H1 (cell line): ENCODE measurements at regions of chr3 and their contacts with region 1.

Region 1: GRCh38 chr3:82475306-82475705 is 713.9 kb upstream of the GBE1 start:
- DNase-seq: no peak
- H3K4me3 ChIP-seq: no peak overlapping the region
- H3K27ac ChIP-seq: no peak overlapping the region
- H3K4me1 ChIP-seq: no peaks in the 10 kb centered on the region
- H3K27me3 ChIP-seq: no peaks in the 10 kb centered on the region
- CTCF ChIP-seq: no peak
- EP300 ChIP-seq: no peak
- POLR2A ChIP-seq: no peak
- RAD21 ChIP-seq: no peak

Region 2: DNA sequence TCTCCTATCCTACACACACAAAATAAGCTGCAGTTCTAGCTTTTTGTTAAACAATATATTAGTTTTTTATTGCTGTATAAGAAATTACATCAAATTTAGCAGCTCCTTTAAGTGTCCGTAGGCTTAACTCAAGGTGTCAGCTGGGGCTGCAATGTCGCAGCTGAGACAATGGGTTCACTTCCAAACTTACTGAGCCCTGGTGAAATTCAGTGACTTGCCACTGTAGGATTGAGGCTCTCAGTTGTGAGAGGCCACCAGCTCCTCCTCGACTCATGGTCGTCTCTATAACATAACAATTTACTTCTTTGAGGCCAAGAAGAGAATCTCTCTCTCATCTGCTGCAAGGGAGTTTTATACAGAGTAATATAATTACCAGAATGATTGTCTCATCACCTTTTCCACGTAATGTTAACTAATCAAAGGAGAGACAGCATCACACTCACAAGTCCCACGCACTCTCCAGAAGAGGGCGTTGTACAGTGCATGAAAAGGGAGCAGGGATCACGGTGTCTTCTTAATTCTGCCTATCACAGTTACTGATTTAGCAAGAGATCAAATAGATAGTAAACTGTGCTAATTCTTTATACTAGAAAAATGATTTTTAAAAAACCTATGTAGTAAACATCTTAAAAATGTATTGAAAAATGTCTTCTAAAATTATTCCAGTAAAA is 21.7 kb after region 1 on chr3:
- CTCF ChIA-PET with region 1: interaction called, 12 read pairs
- POLR2A ChIA-PET with region 1: no interaction called
- DNase-seq: no peak
- H3K4me3 ChIP-seq: no peak overlapping the region
- H3K27ac ChIP-seq: no peak overlapping the region
- H3K4me1 ChIP-seq: no peaks in the 10 kb centered on the region
- H3K27me3 ChIP-seq: no peaks in the 10 kb centered on the region
- CTCF ChIP-seq: peak; percentile 58 to 73 (median 61)
- EP300 ChIP-seq: no peak
- POLR2A ChIP-seq: no peak
- RAD21 ChIP-seq: peak; percentile 61 to 73